Heart left ventricle (tissue), 16 donors: ENCODE measurements at regions of chr20 and their contacts with region 1.

Region 1: DNA sequence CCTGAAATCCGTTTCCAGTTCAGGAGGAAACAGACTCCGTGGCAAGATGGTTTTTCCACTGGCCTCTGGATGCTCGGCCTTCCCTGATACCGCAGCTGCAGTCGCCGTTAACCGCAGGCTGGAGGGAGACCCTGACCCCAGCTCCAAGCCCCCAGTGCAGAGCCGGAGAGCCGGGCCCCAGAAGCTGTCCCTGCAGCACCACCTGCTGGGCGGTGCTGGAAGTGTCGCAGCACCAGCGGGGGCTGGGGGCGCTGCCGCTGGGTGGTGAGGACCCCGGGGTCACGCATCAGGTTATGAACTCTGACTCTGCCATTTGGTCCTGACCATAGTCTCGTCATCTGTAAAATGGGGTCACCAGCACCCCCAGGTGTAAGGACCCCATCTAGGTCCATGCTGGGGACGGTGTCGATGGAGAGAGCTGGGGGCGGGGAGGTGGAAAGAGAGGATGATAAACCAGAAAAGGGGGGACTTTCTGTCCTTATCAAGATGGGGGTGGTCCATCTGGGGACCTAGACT is 20.7 kb upstream of the CHRNA4 start:
- DNase-seq: no peak
- ATAC-seq: peak in 3 of 4 donors; percentile 44 to 64 (median 47)
- H3K4me3 ChIP-seq: no peak overlapping the region
- H3K27ac ChIP-seq: no peak overlapping the region
- H3K4me1 ChIP-seq: peaks cover 0 to 4% (median 0%) of the 10 kb centered on the region in 12 donors
- H3K27me3 ChIP-seq: peaks cover 2 to 64% (median 20%) of the 10 kb centered on the region in 9 donors
- CTCF ChIP-seq: peak; percentile 80 to 97 (median 93)
- POLR2A ChIP-seq: no peak

Region 2: GRCh38 chr20:63223221-63224207 is 158.4 kb before region 1 on chr20:
- intact Hi-C with region 1: loop called in 1 of 10 experiments (anchors 2 kb)
- DNase-seq: no peak
- ATAC-seq: peak in 2 of 4 donors; percentile 27 to 49
- H3K4me3 ChIP-seq: no peak overlapping the region
- H3K27ac ChIP-seq: no peak overlapping the region
- H3K4me1 ChIP-seq: peaks cover 0 to 11% (median 4%) of the 10 kb centered on the region in 12 donors
- H3K27me3 ChIP-seq: peaks cover 0 to 7% (median 0%) of the 10 kb centered on the region in 9 donors
- CTCF ChIP-seq: peak; percentile 52 to 72 (median 58)
- POLR2A ChIP-seq: no peak

Region 3: DNA sequence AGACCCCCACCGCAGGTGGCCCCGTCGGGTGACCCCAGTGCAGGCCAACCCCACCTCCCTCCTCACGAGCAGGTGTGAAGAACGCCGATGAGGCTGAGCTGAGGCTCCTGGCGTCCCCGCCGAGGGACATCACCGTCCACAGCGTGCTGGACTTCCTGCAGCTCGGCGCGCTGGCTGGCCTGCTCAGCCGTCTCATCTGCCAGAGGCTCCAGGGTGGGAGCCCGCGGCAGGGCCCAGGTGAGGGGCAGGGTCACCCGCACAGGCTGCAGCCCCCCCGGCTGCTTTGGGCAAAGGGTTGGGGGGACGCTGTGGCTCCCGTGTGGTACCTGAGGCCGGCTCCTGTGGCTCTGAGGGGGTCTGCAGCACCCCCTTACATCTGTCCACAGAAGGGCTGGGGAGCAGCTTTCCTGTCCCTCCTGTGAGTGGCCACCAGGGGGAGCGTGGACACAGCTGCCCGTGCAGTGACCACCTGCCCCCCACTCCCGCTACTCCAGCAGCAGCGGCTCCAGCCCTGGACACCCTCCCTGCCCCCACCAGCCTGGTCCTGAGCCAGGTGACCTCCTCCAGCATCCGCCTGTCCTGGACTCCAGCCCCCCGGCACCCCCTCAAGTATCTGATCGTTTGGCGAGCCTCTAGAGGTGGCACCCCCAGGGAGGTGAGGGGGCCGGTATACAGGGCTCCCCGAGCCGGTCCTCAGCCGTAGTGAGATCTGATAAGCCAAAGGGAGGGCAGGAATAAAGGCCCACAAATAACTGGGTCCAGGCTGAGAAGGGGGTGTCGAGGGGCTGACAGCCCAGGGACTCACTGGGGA is 72.4 kb before region 1 on chr20:
- intact Hi-C with region 1: loop called (anchors 1 to 2 kb)
- DNase-seq: peak in 4 of 5 donors; percentile 50 to 68 (median 58)
- ATAC-seq: peak in 3 of 4 donors; percentile 39 to 54 (median 54)
- H3K4me3 ChIP-seq: no peak overlapping the region
- H3K27ac ChIP-seq: no peak overlapping the region
- H3K4me1 ChIP-seq: peaks cover 0 to 7% (median 0%) of the 10 kb centered on the region in 12 donors
- H3K27me3 ChIP-seq: peaks cover 13 to 56% (median 31%) of the 10 kb centered on the region in 9 donors
- CTCF ChIP-seq: peak; percentile 74 to 93 (median 88)
- POLR2A ChIP-seq: no peak